ENCODE measurements at regions of chr4 and their contacts with region 1.

Region 1: DNA sequence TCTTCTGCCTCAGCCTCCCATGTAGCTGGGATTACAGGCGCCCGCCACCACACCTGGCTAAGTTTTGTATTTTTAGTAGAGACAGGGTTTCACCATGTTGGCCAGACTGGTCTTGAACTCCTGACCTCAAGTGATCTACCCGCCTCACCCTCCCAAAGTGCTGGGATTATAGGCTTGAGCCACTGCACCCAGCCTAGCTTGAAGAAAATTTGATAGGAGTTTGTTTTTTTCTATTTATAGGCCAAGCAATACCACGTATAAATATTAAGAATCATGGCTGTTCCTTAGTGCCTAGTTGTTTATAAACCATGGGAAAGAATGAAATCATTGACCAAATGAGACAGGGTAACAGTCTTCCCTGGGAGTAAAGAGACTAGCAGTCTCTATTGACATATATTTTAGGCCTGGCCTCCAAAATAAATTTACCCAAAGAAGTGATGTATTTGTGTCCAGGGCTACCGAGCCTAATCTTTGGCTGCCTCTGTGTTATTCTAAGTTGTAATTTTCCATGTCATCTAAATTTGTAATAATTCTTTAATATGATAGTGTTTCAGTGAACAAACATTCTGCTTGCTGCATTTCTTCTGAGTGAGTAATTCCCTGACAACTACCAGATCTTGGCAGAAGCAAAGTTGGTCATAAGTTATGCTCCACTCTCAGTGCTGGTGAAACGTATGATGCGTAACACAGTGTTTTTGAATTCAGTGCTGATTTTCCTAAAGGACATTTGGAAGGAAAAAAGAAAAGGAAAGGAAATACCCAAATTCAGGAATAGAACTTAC is 10.3 kb downstream of the PKD2 start:
- DNase-seq: peak; percentile 26 to 58
- ATAC-seq: peak; percentile 93 to 96
- H3K4me3 ChIP-seq: no peak overlapping the region
- H3K27ac ChIP-seq: peak overlapping the region; percentile 55 to 79; a peak in 5 of 6 replicates
- H3K4me1 ChIP-seq: peaks cover 53% of the 10 kb centered on the region
- CTCF ChIP-seq: no peak
- EP300 ChIP-seq: no peak
- POLR2A ChIP-seq: no peak
- RAD21 ChIP-seq: no peak

Region 2: GRCh38 chr4:87886083-87886482 is 131.6 kb before region 1 on chr4:
- CTCF ChIA-PET with region 1: no interaction called
- POLR2A ChIA-PET with region 1: no interaction called
- DNase-seq: no peak
- ATAC-seq: no peak
- H3K4me3 ChIP-seq: no peak overlapping the region
- H3K27ac ChIP-seq: no peak overlapping the region
- H3K4me1 ChIP-seq: no peaks in the 10 kb centered on the region
- CTCF ChIP-seq: no peak
- EP300 ChIP-seq: no peak
- POLR2A ChIP-seq: no peak
- RAD21 ChIP-seq: no peak

Region 3: DNA sequence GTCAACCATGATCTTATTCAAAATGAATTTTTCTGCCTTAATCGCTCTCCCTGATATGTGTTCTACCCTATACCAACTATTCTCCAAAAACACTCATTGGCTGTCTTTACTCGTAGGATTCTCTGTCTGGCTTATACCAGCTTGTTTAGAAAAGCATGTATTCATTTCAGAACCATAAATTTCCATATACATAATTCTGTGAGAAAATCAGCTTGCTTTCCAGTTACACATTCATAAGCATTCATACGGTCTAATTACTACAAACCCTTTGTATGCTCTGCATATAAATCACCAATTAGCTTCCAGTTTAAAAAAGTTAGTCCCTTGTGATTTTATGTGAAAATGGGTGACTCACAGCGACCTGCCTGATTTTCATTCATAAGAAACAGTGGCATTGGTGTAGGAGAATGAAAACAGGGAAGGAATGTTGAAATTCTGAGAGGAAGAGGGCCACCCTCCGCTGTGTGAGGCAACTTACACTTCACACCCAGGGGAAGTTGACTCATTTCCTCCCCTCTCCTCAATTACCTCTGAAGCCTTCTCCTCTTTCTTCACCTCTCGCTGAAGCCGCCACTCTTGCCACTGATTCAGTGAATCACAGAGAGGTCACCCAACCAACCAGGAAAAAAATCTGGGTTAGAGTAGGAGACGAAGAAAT is 121.6 kb before region 1 on chr4:
- CTCF ChIA-PET with region 1: no interaction called
- POLR2A ChIA-PET with region 1: no interaction called
- DNase-seq: peak; percentile 14 to 36
- ATAC-seq: peak; percentile 55 to 74
- H3K4me3 ChIP-seq: no peak overlapping the region
- H3K27ac ChIP-seq: peak overlapping the region; percentile 11 to 41; a peak in 2 of 6 replicates
- H3K4me1 ChIP-seq: peaks cover 8% of the 10 kb centered on the region; the same call in 2 of the 3 replicates
- CTCF ChIP-seq: no peak
- EP300 ChIP-seq: no peak
- POLR2A ChIP-seq: no peak
- RAD21 ChIP-seq: no peak

Region 4: DNA sequence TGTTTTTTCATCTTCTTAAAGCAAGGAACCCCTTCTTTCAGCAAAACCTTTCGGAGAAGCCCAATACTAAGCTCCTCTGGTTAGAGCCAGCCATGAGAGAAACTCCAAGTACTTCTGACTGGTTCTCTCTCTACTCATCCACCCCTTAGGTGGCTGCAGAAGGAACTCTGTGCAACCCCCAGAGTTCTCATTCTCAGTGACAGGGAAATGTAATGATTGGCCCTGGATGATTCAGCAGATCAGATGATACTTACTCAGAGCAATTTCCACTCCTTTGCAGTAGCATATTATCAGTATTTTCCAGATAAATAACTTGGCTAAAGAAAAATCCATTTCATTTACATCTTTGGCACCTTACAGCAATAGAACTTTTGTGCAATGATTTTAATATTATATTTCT is 39.0 kb before region 1 on chr4:
- CTCF ChIA-PET with region 1: no interaction called
- POLR2A ChIA-PET with region 1: interaction called, 11 read pairs
- DNase-seq: peak in 1 of 2 experiments; percentile 40
- ATAC-seq: peak; percentile 65 to 87
- H3K4me3 ChIP-seq: peak overlapping the region; percentile 24; the same call in 2 of the 3 replicates
- H3K27ac ChIP-seq: peak overlapping the region; percentile 82 to 88
- H3K4me1 ChIP-seq: peaks cover 30% of the 10 kb centered on the region
- CTCF ChIP-seq: no peak
- EP300 ChIP-seq: no peak
- POLR2A ChIP-seq: no peak
- RAD21 ChIP-seq: no peak